ENCODE measurements at regions of chr3 and their contacts with region 1.

Region 1: GRCh38 chr3:107235928-107236315 is 141.3 kb upstream of the CCDC54 start:
- DNase-seq: no peak
- ATAC-seq: peak; percentile 76 to 86 (median 78)
- H3K4me3 ChIP-seq: peak overlapping the region; percentile 63
- H3K27ac ChIP-seq: peak overlapping the region; percentile 11
- H3K4me1 ChIP-seq: peaks cover 12% of the 10 kb centered on the region
- H3K27me3 ChIP-seq: no peaks in the 10 kb centered on the region
- CTCF ChIP-seq: peak; percentile 88

Region 2: GRCh38 chr3:107013641-107014040 is 222.3 kb before region 1 on chr3:
- intact Hi-C with region 1: no loop called
- DNase-seq: no peak
- ATAC-seq: no peak
- H3K4me3 ChIP-seq: no peak overlapping the region
- H3K27ac ChIP-seq: no peak overlapping the region
- H3K4me1 ChIP-seq: no peaks in the 10 kb centered on the region
- H3K27me3 ChIP-seq: no peaks in the 10 kb centered on the region
- CTCF ChIP-seq: no peak

Region 3: DNA sequence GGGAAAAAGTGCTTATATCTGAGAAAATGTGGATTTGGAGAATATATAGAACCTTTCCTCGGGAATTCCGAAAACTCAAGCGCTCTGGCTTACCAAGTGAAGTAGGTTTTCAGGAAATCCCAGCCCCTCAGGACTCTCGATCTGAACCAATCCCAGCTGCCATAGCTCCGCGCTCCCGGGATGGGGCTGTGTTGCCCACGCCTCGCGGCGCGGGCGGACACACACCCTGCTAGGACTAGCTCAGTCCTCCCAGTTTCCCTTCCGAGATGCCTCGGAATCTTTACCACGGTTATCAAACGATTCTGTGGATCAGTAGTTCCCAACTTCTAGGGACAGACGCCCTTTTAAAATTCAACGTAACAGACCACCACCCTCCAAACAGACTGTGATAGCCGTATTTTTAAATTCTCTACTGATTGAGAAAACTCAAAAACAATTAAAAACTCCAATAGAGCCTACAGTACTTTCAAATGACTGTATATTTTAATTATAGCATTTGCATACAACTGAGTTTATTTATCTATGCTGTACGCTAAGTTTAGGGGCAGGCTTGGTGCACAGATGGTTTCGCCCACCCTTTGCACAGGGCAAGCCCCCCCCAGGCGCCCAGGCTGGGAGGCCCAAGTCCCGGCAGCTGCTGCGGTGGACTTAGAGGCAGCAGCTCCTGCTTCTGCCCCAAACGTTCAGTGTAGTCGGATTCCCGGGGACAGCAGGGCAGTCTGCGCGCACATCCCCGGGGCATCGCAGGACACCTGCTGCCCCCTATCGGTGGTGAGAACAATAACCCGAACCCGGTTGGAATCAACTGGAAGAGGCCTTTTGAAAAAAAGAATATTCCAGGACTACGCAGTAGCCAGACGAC is 193.6 kb after region 1 on chr3:
- intact Hi-C with region 1: loop called in 1 of 2 experiments (anchors 5 kb)
- DNase-seq: peak; percentile 79 to 83
- ATAC-seq: peak; percentile 79 to 87 (median 80)
- H3K4me3 ChIP-seq: peak overlapping the region; percentile 92
- H3K27ac ChIP-seq: peak overlapping the region; percentile 51
- H3K4me1 ChIP-seq: peaks cover 3% of the 10 kb centered on the region
- H3K27me3 ChIP-seq: no peaks in the 10 kb centered on the region
- CTCF ChIP-seq: peak; percentile 83

Region 4: DNA sequence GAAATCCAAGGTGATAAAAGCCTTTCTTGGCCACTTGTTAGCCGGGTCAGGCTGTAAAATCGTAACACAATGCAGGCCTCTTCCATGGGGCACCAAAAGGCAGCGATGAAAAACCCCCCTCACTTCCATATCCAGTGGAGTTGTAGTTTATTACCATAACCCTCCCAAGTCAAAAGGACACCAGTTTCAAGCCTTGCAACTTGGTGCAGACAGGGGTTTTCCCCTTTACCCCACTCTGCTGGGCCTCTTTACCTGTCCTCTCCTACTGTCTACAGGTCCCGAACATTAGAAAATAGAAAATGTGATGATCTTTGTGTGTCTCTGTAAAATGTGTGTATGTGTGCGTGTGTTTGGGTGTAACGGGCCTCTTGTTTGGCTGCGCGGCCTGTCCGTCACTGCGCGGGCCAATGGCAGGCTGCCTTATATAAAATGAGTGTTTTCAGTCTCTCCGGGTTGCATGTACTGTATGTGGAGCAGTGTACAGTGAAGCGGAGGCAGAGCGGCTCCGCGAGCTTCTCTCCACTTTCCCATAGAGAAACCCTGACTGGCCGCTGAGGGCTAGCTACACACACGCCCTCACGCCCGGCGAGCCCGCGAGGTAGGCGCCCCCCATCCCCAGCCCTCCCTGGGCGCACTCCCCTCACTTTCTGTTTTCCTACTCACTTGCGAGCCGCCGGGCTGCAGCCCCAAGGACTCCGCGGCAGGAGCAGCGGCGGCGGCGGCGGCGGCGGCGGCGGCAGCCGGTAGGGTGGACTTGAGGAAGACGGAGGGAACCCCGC is 286.8 kb after region 1 on chr3 and contains the start of gene BBX:
- intact Hi-C with region 1: loop called in 1 of 2 experiments (anchors 5 kb)
- DNase-seq: peak; percentile 93
- ATAC-seq: peak; percentile 93 to 97 (median 97)
- H3K4me3 ChIP-seq: peak within 1 kb of the TSS; percentile 95
- H3K27ac ChIP-seq: peak within 1 kb of the TSS; percentile 80
- H3K4me1 ChIP-seq: peaks cover 14% of the 10 kb centered on the region
- H3K27me3 ChIP-seq: no peaks in the 10 kb centered on the region
- CTCF ChIP-seq: no peak
- total RNA-seq, gene BBX: 16.2 to 30.4 (median 24.6) TPM

Region 5: GRCh38 chr3:107660306-107660976 is 424.5 kb after region 1 on chr3:
- intact Hi-C with region 1: loop called in 1 of 2 experiments (anchors 10 kb)
- DNase-seq: no peak
- ATAC-seq: peak in 1 of 4 donors; percentile 56
- H3K4me3 ChIP-seq: no peak overlapping the region
- H3K27ac ChIP-seq: no peak overlapping the region
- H3K4me1 ChIP-seq: peaks cover 25% of the 10 kb centered on the region
- H3K27me3 ChIP-seq: no peaks in the 10 kb centered on the region
- CTCF ChIP-seq: peak; percentile 64

Region 6: GRCh38 chr3:107740992-107741896 is 505.3 kb after region 1 on chr3:
- intact Hi-C with region 1: loop called (anchors 10 kb)
- DNase-seq: no peak
- ATAC-seq: peak in 1 of 4 donors; percentile 69
- H3K4me3 ChIP-seq: no peak overlapping the region
- H3K27ac ChIP-seq: no peak overlapping the region
- H3K4me1 ChIP-seq: no peaks in the 10 kb centered on the region
- H3K27me3 ChIP-seq: no peaks in the 10 kb centered on the region
- CTCF ChIP-seq: peak; percentile 69

Region 7: DNA sequence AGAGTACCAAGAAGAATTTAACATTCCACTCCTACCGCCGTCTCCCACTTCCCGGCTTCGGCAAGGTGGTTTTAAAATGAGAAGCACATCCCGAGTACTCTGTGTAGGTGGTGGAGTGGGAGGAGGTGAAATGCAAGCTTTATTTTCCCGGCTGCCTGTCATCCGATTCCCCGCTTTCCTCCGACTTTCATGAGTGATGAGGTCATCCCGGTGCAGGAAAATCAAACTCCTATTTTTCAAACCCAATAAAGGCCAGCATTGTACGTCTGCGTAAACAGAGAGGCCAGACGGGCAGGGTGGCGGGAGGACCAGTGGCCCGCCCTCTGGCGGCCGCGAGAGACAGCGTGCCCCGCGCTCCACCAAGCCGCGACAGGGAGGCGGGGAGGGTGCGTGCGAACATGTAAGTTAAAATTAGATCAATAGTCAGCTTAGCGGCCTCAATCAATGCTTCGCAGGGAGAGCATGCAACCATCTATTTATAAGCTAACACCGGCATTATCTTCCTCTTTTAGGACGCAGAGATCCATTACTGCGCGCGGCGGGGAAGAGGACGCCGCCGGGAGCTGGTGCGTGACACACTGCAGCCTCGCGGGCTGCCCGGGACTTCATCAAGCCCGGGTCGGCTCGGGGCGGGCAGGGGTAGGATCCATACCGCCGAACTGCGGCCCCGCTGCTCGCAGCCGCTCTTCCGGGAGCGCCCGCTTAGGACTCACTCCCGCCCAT is 691.6 kb after region 1 on chr3:
- intact Hi-C with region 1: loop called (anchors 10 kb)
- DNase-seq: peak; percentile 72 to 85
- ATAC-seq: peak; percentile 93 to 98 (median 96)
- H3K4me3 ChIP-seq: peak overlapping the region; percentile 65
- H3K27ac ChIP-seq: no peak overlapping the region
- H3K4me1 ChIP-seq: peaks cover 5% of the 10 kb centered on the region
- H3K27me3 ChIP-seq: no peaks in the 10 kb centered on the region
- CTCF ChIP-seq: peak; percentile 91

Region 8: DNA sequence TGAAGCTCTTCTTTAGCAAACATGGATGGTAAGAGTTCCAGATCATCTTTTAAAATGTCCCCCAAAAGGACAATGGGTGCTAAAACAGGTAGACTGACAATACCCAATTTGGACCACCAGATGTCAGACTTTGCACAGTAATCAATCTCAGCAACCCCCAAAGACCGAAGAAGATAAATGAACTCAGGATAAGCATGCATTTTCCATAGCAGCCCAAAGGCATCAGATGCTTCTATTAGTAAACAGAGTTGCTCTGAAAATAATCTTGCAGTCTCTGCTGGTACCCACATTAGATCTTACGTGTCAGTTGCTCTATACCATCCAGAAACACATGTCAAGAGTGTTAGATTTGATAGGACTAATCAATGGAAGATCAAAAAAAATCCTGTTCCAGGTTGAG is 1253.8 kb after region 1 on chr3:
- intact Hi-C with region 1: loop called (anchors 10 kb)
- DNase-seq: no peak
- ATAC-seq: peak in 3 of 4 donors; percentile 56 to 69 (median 59)
- H3K4me3 ChIP-seq: no peak overlapping the region
- H3K27ac ChIP-seq: no peak overlapping the region
- H3K4me1 ChIP-seq: peaks cover 7% of the 10 kb centered on the region
- H3K27me3 ChIP-seq: no peaks in the 10 kb centered on the region
- CTCF ChIP-seq: peak; percentile 78